AG04450 (cell line): ENCODE measurements at regions of chr11 and their contacts with region 1.

Region 1: DNA sequence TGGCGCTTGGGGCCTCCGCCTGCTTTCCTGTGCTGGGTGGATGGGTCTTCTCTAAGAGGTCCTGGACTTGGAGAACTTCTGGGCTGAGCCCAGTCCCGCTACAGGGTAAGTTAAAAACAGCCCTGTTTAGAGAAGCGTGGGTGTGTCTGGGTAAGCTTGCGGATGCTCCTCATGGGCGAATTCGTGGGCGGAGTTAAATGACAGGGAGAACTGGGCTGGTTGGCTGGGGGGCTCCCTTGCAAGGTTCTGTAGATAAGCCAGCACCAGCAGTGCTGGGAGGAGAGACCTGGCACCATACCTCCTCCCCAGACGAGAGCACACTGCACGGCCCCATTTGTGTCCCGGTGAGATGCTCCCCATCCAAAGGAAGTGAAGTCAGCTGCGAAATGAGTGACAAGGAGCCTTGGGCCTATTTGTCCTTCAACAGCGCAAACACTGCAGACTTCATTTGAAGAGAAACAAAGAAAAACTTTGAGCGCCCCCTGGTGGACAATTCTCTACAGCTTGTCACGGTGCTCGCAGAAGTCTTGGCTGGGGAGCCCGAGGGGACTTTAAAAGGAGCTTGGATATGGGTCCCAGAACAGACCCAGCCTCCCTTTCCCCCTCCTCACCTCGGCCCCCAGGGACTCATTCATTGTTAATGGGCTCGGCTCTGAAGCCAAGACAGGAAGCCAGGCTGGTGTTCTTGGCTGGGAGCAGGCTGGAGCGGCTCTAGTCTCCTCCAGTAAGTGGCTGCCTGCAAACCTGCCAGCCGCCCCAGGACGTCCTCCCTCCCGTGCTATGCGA is 39.5 kb downstream of the TP53I11 start:
- DNase-seq: peak; percentile 59
- H3K4me3 ChIP-seq: no peak overlapping the region
- H3K27ac ChIP-seq: no peak overlapping the region
- H3K27me3 ChIP-seq: peaks cover 13% of the 10 kb centered on the region
- CTCF ChIP-seq: peak; percentile 75

Region 2: GRCh38 chr11:44551456-44552139 is 359.6 kb before region 1 on chr11:
- CTCF ChIA-PET with region 1: interaction called, 34 read pairs
- POLR2A ChIA-PET with region 1: no interaction called
- DNase-seq: no peak
- H3K4me3 ChIP-seq: no peak overlapping the region
- H3K27ac ChIP-seq: no peak overlapping the region
- H3K27me3 ChIP-seq: peaks cover 6% of the 10 kb centered on the region
- CTCF ChIP-seq: no peak

Region 3: GRCh38 chr11:44565211-44565952 is 345.8 kb before region 1 on chr11 and contains the start of gene CD82:
- CTCF ChIA-PET with region 1: interaction called, 10 read pairs
- POLR2A ChIA-PET with region 1: no interaction called
- DNase-seq: peak; percentile 96
- H3K4me3 ChIP-seq: peak within 1 kb of the TSS; percentile 83
- H3K27ac ChIP-seq: peak within 1 kb of the TSS; percentile 99
- H3K27me3 ChIP-seq: no peaks in the 10 kb centered on the region
- CTCF ChIP-seq: peak; percentile 26; the same call in 1 of the 2 replicates
- polyA plus RNA-seq, gene CD82: 49.3 and 62.0 TPM in 2 replicates

Region 4: DNA sequence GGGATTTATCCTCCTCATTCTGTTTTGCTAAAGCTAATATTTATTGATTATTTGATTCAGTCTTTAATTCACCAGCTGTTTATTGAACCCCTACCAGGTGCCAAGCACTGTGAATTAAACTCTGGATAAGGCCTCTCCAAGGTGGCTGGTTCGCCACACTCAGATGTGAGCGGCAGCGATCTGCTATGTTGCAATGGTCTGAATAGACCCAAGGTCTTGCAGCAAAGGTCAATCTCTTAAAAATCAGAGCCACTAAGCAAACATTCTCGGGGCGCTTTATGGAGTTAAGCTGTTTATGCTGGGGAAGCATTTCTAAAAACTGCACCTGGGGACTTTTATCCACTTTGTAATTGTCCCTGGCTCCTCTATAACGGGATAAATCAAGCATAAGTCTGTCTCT is 195.0 kb before region 1 on chr11:
- CTCF ChIA-PET with region 1: interaction called, 16 read pairs
- POLR2A ChIA-PET with region 1: no interaction called
- DNase-seq: no peak
- H3K4me3 ChIP-seq: no peak overlapping the region
- H3K27ac ChIP-seq: no peak overlapping the region
- H3K27me3 ChIP-seq: peaks cover 35% of the 10 kb centered on the region
- CTCF ChIP-seq: no peak

Region 5: GRCh38 chr11:44809283-44809682 is 101.9 kb before region 1 on chr11:
- CTCF ChIA-PET with region 1: no interaction called
- POLR2A ChIA-PET with region 1: no interaction called
- DNase-seq: no peak
- H3K4me3 ChIP-seq: no peak overlapping the region
- H3K27ac ChIP-seq: no peak overlapping the region
- H3K27me3 ChIP-seq: peaks cover 8% of the 10 kb centered on the region
- CTCF ChIP-seq: no peak

Region 6: GRCh38 chr11:44893846-44894617 is 17.2 kb before region 1 on chr11:
- CTCF ChIA-PET with region 1: interaction called, 41 read pairs
- POLR2A ChIA-PET with region 1: no interaction called
- DNase-seq: peak; percentile 53
- H3K4me3 ChIP-seq: no peak overlapping the region
- H3K27ac ChIP-seq: no peak overlapping the region
- H3K27me3 ChIP-seq: peaks cover 29% of the 10 kb centered on the region
- CTCF ChIP-seq: peak; percentile 99

Region 7: DNA sequence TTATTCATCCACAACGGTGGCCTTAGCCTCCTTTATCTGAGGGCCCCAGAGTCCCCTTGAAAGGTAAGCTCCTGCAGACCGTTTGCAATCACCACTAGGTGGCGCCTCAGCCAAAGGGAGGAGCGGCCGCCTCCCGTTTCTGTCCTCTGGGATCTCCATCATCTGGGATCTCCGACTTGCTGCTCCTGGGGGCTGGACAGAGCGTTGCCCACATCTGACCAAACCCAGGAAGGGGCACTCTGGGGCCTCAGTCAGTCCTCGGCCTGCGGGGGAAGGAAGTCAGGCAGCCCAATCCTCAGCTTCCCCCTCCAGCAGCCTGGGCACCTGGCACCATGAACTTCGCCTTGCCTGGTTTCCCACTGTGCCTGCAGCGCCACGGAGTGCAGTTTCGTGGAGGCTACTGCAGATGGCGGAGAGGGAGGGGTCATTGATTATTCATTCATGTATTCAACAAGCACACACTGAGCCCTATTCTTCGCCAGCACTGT is 16.0 kb after region 1 on chr11:
- CTCF ChIA-PET with region 1: interaction called, 16 read pairs
- POLR2A ChIA-PET with region 1: no interaction called
- DNase-seq: peak; percentile 39
- H3K4me3 ChIP-seq: no peak overlapping the region
- H3K27ac ChIP-seq: no peak overlapping the region
- H3K27me3 ChIP-seq: peaks cover 37% of the 10 kb centered on the region
- CTCF ChIP-seq: peak; percentile 86

Region 8: DNA sequence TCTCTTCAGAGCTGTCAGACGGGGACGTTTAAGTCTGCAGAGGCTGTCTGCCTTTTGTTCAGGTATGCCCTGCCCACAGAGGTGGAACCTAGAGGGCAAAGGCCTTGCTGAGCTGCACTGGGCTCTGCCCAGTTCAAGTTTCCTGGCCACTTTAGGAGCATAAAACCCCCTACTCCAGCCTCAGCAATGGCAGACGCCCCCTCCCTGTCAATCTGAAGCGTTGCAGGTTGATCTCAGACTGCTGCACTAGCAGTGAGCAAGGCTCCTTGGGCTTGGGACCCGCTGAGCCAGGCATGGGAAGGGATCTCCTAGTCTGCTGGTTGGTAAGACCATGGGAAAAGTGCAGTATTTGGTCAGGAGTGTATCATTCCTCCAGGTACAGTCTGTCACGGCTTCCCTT is 106.1 kb after region 1 on chr11:
- CTCF ChIA-PET with region 1: no interaction called
- POLR2A ChIA-PET with region 1: no interaction called
- DNase-seq: no peak
- H3K4me3 ChIP-seq: no peak overlapping the region
- H3K27ac ChIP-seq: no peak overlapping the region
- H3K27me3 ChIP-seq: peaks cover 12% of the 10 kb centered on the region
- CTCF ChIP-seq: peak; percentile 15; the same call in 1 of the 2 replicates

Region 9: GRCh38 chr11:45031912-45032519 is 120.8 kb after region 1 on chr11:
- CTCF ChIA-PET with region 1: no interaction called
- POLR2A ChIA-PET with region 1: no interaction called
- DNase-seq: no peak
- H3K4me3 ChIP-seq: no peak overlapping the region
- H3K27ac ChIP-seq: no peak overlapping the region
- H3K27me3 ChIP-seq: peaks cover 35% of the 10 kb centered on the region
- CTCF ChIP-seq: no peak